Colonic mucosa (tissue), 4 donors: ENCODE measurements at regions of chr2 and their contacts with region 1.

Region 1: GRCh38 chr2:61910603-61911002 is 5.1 kb downstream of the COMMD1 start:
- DNase-seq: no peak
- H3K4me3 ChIP-seq: no peak overlapping the region
- H3K27ac ChIP-seq: no peak overlapping the region
- H3K4me1 ChIP-seq: no peaks in the 10 kb centered on the region
- H3K27me3 ChIP-seq: no peaks in the 10 kb centered on the region
- CTCF ChIP-seq: peak; percentile 15

Region 2: DNA sequence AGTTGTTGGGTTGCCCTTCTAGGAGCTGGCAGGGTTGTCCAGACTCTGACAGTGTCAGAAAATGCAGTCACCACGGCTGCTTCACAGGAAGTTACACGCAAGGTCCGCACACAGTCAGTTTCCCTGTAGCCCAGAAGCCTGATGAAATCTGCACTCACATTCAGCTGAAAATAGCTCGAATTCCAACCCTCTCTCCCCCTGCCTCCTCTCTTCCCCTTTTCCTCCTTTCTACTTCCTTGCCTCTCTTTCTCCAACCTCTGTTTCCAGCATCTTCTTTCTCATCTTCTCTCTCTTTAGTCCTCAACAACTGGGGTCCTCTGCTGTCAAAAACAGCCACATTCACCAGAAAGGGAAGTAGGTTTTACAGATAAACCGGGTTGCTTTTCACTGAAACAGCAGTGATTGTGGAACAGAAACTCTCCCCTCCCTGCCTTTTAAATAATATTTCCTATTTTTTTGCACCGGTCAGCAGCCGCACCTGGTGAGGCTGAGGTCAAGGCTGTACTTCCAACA is 1426.4 kb before region 1 on chr2:
- intact Hi-C with region 1: no loop called
- DNase-seq: no peak
- H3K4me3 ChIP-seq: no peak overlapping the region
- H3K27ac ChIP-seq: no peak overlapping the region
- H3K4me1 ChIP-seq: peaks cover 8% of the 10 kb centered on the region
- H3K27me3 ChIP-seq: no peaks in the 10 kb centered on the region
- CTCF ChIP-seq: no peak

Region 3: GRCh38 chr2:61707969-61708852 is 202.4 kb before region 1 on chr2:
- intact Hi-C with region 1: no loop called
- DNase-seq: no peak
- H3K4me3 ChIP-seq: no peak overlapping the region
- H3K27ac ChIP-seq: no peak overlapping the region
- H3K4me1 ChIP-seq: no peaks in the 10 kb centered on the region
- H3K27me3 ChIP-seq: no peaks in the 10 kb centered on the region
- CTCF ChIP-seq: no peak

Region 4: DNA sequence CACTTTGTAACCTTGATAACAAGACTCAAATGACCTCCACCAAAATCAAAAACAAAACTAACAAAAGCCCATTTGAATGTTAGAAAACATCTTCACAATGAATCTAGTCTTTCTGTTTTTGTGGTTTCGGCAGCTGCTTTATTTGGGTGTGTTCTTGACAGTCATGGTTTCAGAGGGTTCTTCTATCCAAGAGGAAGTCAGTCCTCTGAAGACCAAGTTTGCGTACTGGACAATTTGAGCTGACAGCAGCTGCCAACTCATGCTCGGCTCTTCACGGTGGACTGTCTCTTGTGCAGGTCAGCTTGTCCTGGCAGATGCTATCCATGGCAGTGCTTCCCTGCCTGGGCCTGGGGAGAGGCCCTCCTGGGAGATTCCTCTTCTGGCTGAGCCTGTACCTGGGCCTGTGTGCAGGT is 504.4 kb after region 1 on chr2:
- intact Hi-C with region 1: loop called (anchors 5 kb)
- DNase-seq: no peak
- H3K4me3 ChIP-seq: no peak overlapping the region
- H3K27ac ChIP-seq: no peak overlapping the region
- H3K4me1 ChIP-seq: no peaks in the 10 kb centered on the region
- H3K27me3 ChIP-seq: no peaks in the 10 kb centered on the region
- CTCF ChIP-seq: no peak